CD8-positive, alpha-beta T cell (primary cell): ENCODE measurements at regions of chr17 and their contacts with region 1.

Region 1: GRCh38 chr17:64420143-64420971 is 28.6 kb upstream of the MILR1 start:
- DNase-seq: peak in 5 of 9 experiments; percentile 27 to 85 (median 62)
- ATAC-seq: peak; percentile 88
- H3K4me3 ChIP-seq: no peak overlapping the region
- H3K4me3 Mint-ChIP-seq: no peak overlapping the region
- H3K27ac ChIP-seq: no peak overlapping the region
- H3K27ac Mint-ChIP-seq: no peak overlapping the region
- H3K4me1 ChIP-seq: peaks cover 4% of the 10 kb centered on the region
- H3K4me1 Mint-ChIP-seq: peaks cover 2% of the 10 kb centered on the region
- H3K27me3 ChIP-seq: no peaks in the 10 kb centered on the region
- H3K27me3 Mint-ChIP-seq: no peaks in the 10 kb centered on the region
- CTCF ChIP-seq: peak; percentile 80

Region 2: GRCh38 chr17:64291254-64291851 is 129.0 kb before region 1 on chr17:
- CTCF ChIA-PET with region 1: interaction called, 19 read pairs
- POLR2A ChIA-PET with region 1: no interaction called
- intact Hi-C with region 1: no loop called
- DNase-seq: peak in 1 of 9 experiments; percentile 13
- ATAC-seq: no peak
- H3K4me3 ChIP-seq: no peak overlapping the region
- H3K4me3 Mint-ChIP-seq: no peak overlapping the region
- H3K27ac ChIP-seq: no peak overlapping the region
- H3K27ac Mint-ChIP-seq: no peak overlapping the region
- H3K4me1 ChIP-seq: no peaks in the 10 kb centered on the region
- H3K4me1 Mint-ChIP-seq: no peaks in the 10 kb centered on the region
- H3K27me3 ChIP-seq: no peaks in the 10 kb centered on the region
- H3K27me3 Mint-ChIP-seq: no peaks in the 10 kb centered on the region
- CTCF ChIP-seq: no peak

Region 3: GRCh38 chr17:64339516-64340490 is 80.6 kb before region 1 on chr17:
- CTCF ChIA-PET with region 1: interaction called, 22 read pairs
- POLR2A ChIA-PET with region 1: no interaction called
- intact Hi-C with region 1: no loop called
- DNase-seq: no peak
- ATAC-seq: no peak
- H3K4me3 ChIP-seq: no peak overlapping the region
- H3K4me3 Mint-ChIP-seq: no peak overlapping the region
- H3K27ac ChIP-seq: no peak overlapping the region
- H3K27ac Mint-ChIP-seq: peak overlapping the region; percentile 49
- H3K4me1 ChIP-seq: peaks cover 7% of the 10 kb centered on the region
- H3K4me1 Mint-ChIP-seq: peaks cover 23% of the 10 kb centered on the region
- H3K27me3 ChIP-seq: no peaks in the 10 kb centered on the region
- H3K27me3 Mint-ChIP-seq: no peaks in the 10 kb centered on the region
- CTCF ChIP-seq: no peak

Region 4: GRCh38 chr17:64393000-64393402 is 27.4 kb before region 1 on chr17:
- CTCF ChIA-PET with region 1: interaction called, 119 read pairs
- POLR2A ChIA-PET with region 1: interaction called, 4 read pairs
- intact Hi-C with region 1: loop called in 1 of 2 experiments (anchors 2 kb)
- DNase-seq: peak in 7 of 9 experiments; percentile 28 to 77 (median 63)
- ATAC-seq: peak; percentile 76
- H3K4me3 ChIP-seq: peak overlapping the region; percentile 52 to 56
- H3K4me3 Mint-ChIP-seq: peak overlapping the region; percentile 87
- H3K27ac ChIP-seq: peak overlapping the region; percentile 60 to 78
- H3K27ac Mint-ChIP-seq: peak overlapping the region; percentile 96
- H3K4me1 ChIP-seq: peaks cover 79% of the 10 kb centered on the region
- H3K4me1 Mint-ChIP-seq: peaks cover 61% of the 10 kb centered on the region
- H3K27me3 ChIP-seq: no peaks in the 10 kb centered on the region
- H3K27me3 Mint-ChIP-seq: no peaks in the 10 kb centered on the region
- CTCF ChIP-seq: no peak

Region 5: DNA sequence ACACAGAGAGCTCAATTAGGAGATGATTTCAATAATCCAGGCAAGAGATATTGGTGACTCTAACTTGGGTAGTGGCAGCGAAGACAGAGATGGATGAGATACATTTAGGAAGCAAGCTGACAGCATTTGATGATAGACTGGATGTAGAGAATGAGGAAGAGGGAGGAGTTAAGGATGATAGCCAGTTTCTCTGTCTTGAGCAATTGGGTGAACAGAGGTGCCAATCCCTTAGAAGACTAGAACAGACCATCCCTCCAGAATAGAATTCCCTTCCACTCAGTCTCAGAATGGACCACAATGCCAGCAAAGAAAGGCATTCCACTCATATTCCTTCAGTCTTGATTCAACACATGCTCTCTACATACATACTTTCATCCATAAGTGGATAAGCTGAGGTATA is 59.3 kb after region 1 on chr17:
- CTCF ChIA-PET with region 1: interaction called, 19 read pairs
- POLR2A ChIA-PET with region 1: no interaction called
- intact Hi-C with region 1: no loop called
- DNase-seq: no peak
- ATAC-seq: no peak
- H3K4me3 ChIP-seq: no peak overlapping the region
- H3K4me3 Mint-ChIP-seq: no peak overlapping the region
- H3K27ac ChIP-seq: no peak overlapping the region
- H3K27ac Mint-ChIP-seq: peak overlapping the region; percentile 52
- H3K4me1 ChIP-seq: peaks cover 4% of the 10 kb centered on the region
- H3K4me1 Mint-ChIP-seq: peaks cover 7% of the 10 kb centered on the region
- H3K27me3 ChIP-seq: no peaks in the 10 kb centered on the region
- H3K27me3 Mint-ChIP-seq: no peaks in the 10 kb centered on the region
- CTCF ChIP-seq: no peak

Region 6: GRCh38 chr17:64534175-64534574 is 113.8 kb after region 1 on chr17:
- CTCF ChIA-PET with region 1: interaction called, 6 read pairs
- POLR2A ChIA-PET with region 1: no interaction called
- intact Hi-C with region 1: loop called in 1 of 2 experiments (anchors 1 kb)
- DNase-seq: peak in 2 of 9 experiments; percentile 11 to 24
- ATAC-seq: peak; percentile 34
- H3K4me3 ChIP-seq: no peak overlapping the region
- H3K4me3 Mint-ChIP-seq: no peak overlapping the region
- H3K27ac ChIP-seq: no peak overlapping the region
- H3K27ac Mint-ChIP-seq: no peak overlapping the region
- H3K4me1 ChIP-seq: no peaks in the 10 kb centered on the region
- H3K4me1 Mint-ChIP-seq: no peaks in the 10 kb centered on the region
- H3K27me3 ChIP-seq: no peaks in the 10 kb centered on the region
- H3K27me3 Mint-ChIP-seq: no peaks in the 10 kb centered on the region
- CTCF ChIP-seq: no peak

Region 7: DNA sequence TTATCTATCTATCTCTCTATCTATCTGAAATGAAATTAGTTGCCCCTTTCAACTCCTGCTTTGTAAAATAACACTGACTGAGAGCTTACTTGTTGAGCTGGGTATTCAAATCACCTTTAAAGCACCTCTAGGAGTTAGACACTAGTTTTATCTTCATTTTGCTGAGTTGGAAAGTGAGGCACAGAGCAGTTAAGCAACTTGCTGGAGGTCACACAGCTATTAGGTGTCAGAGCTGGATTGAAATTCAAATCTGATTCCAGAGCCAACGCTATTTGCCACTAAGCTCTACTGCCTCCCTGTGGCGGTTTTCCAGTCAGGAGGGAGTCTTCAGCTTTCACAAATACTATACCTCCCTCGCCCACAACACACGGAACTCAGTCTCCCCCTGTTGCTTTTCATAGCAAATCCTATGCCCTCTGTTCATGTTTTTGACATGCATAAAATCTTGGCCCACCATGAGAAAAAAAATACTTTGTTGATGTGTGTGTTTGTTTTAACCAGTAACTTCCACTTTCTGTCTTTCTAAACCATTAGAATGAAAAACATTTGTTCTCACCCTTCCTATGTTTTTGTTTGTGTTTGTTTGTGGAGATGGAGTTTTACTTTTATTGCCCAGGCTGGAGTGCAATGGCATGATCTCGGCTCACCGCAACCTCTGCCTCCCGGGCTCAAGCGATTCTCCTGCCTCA is 316.6 kb after region 1 on chr17:
- CTCF ChIA-PET with region 1: interaction called, 34 read pairs
- POLR2A ChIA-PET with region 1: no interaction called
- intact Hi-C with region 1: loop called (anchors 1 to 2 kb)
- DNase-seq: peak; percentile 24 to 76 (median 55)
- ATAC-seq: peak; percentile 69
- H3K4me3 ChIP-seq: no peak overlapping the region
- H3K4me3 Mint-ChIP-seq: no peak overlapping the region
- H3K27ac ChIP-seq: no peak overlapping the region
- H3K27ac Mint-ChIP-seq: no peak overlapping the region
- H3K4me1 ChIP-seq: no peaks in the 10 kb centered on the region
- H3K4me1 Mint-ChIP-seq: peaks cover 22% of the 10 kb centered on the region
- H3K27me3 ChIP-seq: no peaks in the 10 kb centered on the region
- H3K27me3 Mint-ChIP-seq: no peaks in the 10 kb centered on the region
- CTCF ChIP-seq: peak; percentile 55